ENCODE measurements at regions of chr3 and their contacts with region 1.

Region 1: GRCh38 chr3:159260049-159260662 is 458.3 kb downstream of the MFSD1 start:
- DNase-seq: peak; percentile 65
- H3K4me3 ChIP-seq: no peak overlapping the region
- H3K27ac ChIP-seq: no peak overlapping the region
- H3K4me1 ChIP-seq: no peaks in the 10 kb centered on the region
- H3K27me3 ChIP-seq: peaks cover 2 to 21% of the 10 kb centered on the region in 2 experiments
- CTCF ChIP-seq: peak; percentile 42 to 43
- POLR2A ChIP-seq: no peak

Region 2: GRCh38 chr3:158727206-158728060 is 532.7 kb before region 1 on chr3:
- CTCF ChIA-PET with region 1: interaction called, 16 read pairs
- POLR2A ChIA-PET with region 1: no interaction called
- dilution Hi-C with region 1: no loop called
- intact Hi-C with region 1: no loop called
- DNase-seq: peak; percentile 80
- H3K4me3 ChIP-seq: no peak overlapping the region
- H3K27ac ChIP-seq: no peak overlapping the region
- H3K4me1 ChIP-seq: peaks cover 39% of the 10 kb centered on the region
- H3K27me3 ChIP-seq: no peaks in the 10 kb centered on the region
- CTCF ChIP-seq: peak; percentile 58 to 72
- POLR2A ChIP-seq: no peak

Region 3: DNA sequence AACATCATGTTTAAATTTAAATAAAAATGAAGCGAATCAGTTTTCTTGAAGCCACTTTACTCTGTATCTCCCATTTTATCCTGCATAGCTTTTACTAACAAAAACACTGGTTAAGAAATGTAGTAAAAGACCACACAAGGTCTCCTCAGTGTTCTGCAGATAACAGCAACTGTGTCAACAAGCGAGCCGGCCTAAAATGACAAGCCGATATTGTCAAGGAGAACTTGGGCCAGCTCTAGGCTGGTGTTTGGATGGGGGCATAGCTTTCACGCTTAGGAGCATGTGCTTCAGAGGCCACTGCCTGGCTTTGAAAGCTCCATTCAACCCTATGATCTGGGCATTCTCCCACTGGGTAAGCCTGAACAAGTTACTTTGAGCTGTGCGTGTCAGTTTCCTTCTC is 420.2 kb before region 1 on chr3:
- CTCF ChIA-PET with region 1: interaction called, 249 read pairs
- POLR2A ChIA-PET with region 1: no interaction called
- dilution Hi-C with region 1: no loop called
- intact Hi-C with region 1: loop called (anchors 1 kb)
- DNase-seq: no peak
- H3K4me3 ChIP-seq: no peak overlapping the region
- H3K27ac ChIP-seq: no peak overlapping the region
- H3K4me1 ChIP-seq: no peaks in the 10 kb centered on the region
- H3K27me3 ChIP-seq: no peaks in the 10 kb centered on the region
- CTCF ChIP-seq: no peak
- POLR2A ChIP-seq: no peak

Region 4: DNA sequence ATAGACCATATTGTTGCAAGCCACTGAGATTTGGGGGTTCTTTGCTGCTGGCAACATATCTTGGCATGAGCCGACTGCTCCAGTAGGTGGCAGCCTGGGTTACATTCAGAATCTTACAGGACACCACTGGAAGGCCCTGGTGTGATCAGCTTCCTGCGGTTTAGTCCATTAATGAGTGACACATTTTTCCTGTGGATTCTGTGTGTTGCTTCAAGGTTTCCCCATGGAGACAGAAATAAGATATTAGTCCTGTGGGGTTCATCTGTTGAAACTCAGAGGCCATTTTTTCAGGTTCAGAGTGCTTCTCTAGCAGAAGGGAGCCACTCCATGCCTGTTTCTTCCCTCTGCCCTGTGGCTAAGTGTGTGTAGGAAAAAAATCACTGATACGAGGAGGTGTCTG is 342.1 kb before region 1 on chr3:
- CTCF ChIA-PET with region 1: interaction called, 121 read pairs
- POLR2A ChIA-PET with region 1: no interaction called
- dilution Hi-C with region 1: loop called (anchors 25 kb)
- intact Hi-C with region 1: loop called (anchors 1 kb)
- DNase-seq: peak; percentile 83
- H3K4me3 ChIP-seq: no peak overlapping the region
- H3K27ac ChIP-seq: peak overlapping the region; percentile 61
- H3K4me1 ChIP-seq: peaks cover 4% of the 10 kb centered on the region
- H3K27me3 ChIP-seq: no peaks in the 10 kb centered on the region
- CTCF ChIP-seq: peak; percentile 82 to 84
- POLR2A ChIP-seq: no peak

Region 5: DNA sequence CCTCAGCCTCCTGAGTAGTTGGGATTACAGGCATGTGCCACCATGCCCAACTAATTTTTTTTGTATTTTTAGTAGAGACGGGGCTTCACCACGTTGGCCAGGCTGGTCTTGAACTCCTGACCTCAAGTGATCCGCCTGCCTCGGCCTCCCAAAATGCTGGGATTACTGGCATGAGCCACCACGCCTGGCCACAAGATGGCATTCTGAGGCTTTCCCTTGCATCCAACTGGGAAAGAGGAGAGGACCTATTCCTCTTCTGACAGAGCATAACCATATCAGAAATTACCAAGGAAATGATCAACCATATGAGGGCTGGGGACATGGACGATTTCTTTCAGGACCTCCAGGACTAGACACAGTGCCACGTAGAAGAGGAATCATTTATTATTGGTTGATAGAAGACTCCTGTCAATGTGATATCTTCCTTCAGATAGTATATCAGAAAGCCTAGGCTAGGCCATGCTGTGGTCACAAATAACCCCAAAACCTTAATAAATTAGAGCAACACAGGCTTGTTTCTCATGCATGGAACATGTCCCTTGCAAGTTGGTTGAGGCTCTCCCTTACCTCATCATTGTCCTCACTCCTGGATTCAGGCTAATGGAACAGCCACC is 356.2 kb after region 1 on chr3:
- CTCF ChIA-PET with region 1: interaction called, 3 read pairs
- POLR2A ChIA-PET with region 1: no interaction called
- dilution Hi-C with region 1: no loop called
- intact Hi-C with region 1: loop called (anchors 10 kb)
- DNase-seq: peak; percentile 60
- H3K4me3 ChIP-seq: no peak overlapping the region
- H3K27ac ChIP-seq: no peak overlapping the region
- H3K4me1 ChIP-seq: peaks cover 18% of the 10 kb centered on the region
- H3K27me3 ChIP-seq: no peaks in the 10 kb centered on the region
- CTCF ChIP-seq: peak; percentile 38 to 64
- POLR2A ChIP-seq: no peak

Region 6: DNA sequence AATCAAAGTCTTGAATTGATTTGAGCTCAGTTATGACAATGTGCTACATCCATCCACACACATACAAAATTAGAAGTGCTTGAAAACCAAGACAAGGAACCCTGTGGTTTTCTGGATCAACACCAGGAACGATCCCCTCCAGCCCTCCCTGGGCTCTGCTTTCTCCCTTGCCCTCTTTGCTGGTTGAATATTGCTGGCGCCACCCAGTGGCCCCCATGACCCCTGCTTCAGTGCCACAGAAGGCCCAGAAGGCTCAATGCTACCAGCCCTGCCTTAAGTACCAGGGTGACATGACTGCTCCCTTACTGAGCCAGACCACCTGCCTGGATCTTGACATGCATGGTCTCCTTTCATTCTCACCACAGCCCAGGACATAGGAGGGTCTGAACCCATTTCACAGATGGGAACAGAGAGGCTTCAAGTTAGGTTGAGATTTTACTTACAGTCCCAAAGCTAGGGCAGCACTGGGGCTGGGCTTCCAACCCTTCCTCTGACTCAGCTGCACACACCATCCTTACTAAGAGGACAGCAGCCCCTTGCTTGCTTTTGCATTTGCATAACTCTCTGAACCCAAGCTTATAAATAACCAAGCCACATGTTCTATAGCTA is 743.5 kb after region 1 on chr3:
- CTCF ChIA-PET with region 1: interaction called, 26 read pairs
- POLR2A ChIA-PET with region 1: no interaction called
- dilution Hi-C with region 1: no loop called
- intact Hi-C with region 1: loop called (anchors 1 kb)
- DNase-seq: peak; percentile 68
- H3K4me3 ChIP-seq: no peak overlapping the region
- H3K27ac ChIP-seq: no peak overlapping the region
- H3K4me1 ChIP-seq: no peaks in the 10 kb centered on the region
- H3K27me3 ChIP-seq: no peaks in the 10 kb centered on the region
- CTCF ChIP-seq: peak; percentile 67
- POLR2A ChIP-seq: no peak